ENCODE measurements at regions of chr2 and their contacts with region 1.

Region 1: GRCh38 chr2:233129351-233129987 is 69.3 kb downstream of the INPP5D start:
- DNase-seq: peak; percentile 78
- ATAC-seq: peak; percentile 92
- H3K4me3 Mint-ChIP-seq: no peak overlapping the region
- H3K27ac Mint-ChIP-seq: no peak overlapping the region; the same call in 1 of the 2 replicates
- H3K4me1 Mint-ChIP-seq: peaks cover 24% of the 10 kb centered on the region
- H3K27me3 Mint-ChIP-seq: no peaks in the 10 kb centered on the region
- CTCF ChIP-seq: peak; percentile 38; the same call in 1 of the 2 replicates

Region 2: GRCh38 chr2:232999354-232999753 is 130.1 kb before region 1 on chr2:
- CTCF ChIA-PET with region 1: no interaction called
- POLR2A ChIA-PET with region 1: no interaction called
- DNase-seq: no peak
- ATAC-seq: peak; percentile 69
- H3K4me3 Mint-ChIP-seq: no peak overlapping the region
- H3K27ac Mint-ChIP-seq: no peak overlapping the region
- H3K4me1 Mint-ChIP-seq: no peaks in the 10 kb centered on the region
- H3K27me3 Mint-ChIP-seq: peaks cover 2% of the 10 kb centered on the region; the same call in 1 of the 2 replicates
- CTCF ChIP-seq: no peak

Region 3: DNA sequence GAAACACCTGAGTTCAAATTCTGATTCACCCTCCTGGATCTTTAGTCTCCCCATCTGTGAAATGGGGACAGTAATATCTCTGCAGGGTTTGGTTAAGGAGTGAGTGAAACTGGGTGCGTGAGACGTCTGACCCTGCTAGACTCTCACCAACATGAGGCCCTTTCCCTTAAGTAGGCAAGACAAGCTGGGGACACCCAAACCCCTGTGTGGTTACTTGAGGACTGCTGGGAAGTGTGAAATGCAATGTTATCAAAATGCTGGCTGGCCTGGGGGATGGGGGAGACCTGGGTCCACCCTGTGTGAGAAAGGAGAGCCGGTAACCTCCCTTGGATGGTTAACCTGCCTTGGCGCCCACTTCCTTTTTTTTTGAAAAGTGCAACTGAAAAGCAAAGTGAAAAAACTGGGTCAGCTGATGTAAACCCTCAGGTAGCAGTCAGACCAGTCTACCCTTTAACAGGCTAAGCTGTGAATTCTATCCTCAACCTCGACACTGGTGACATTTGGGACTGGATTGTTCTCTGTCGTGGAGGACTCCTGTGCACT is 13.0 kb after region 1 on chr2:
- CTCF ChIA-PET with region 1: interaction called, 25 read pairs
- POLR2A ChIA-PET with region 1: no interaction called
- DNase-seq: no peak
- ATAC-seq: no peak
- H3K4me3 Mint-ChIP-seq: peak overlapping the region; percentile 3
- H3K27ac Mint-ChIP-seq: peak overlapping the region; percentile 93
- H3K4me1 Mint-ChIP-seq: peaks cover 63% of the 10 kb centered on the region
- H3K27me3 Mint-ChIP-seq: no peaks in the 10 kb centered on the region
- CTCF ChIP-seq: no peak

Region 4: DNA sequence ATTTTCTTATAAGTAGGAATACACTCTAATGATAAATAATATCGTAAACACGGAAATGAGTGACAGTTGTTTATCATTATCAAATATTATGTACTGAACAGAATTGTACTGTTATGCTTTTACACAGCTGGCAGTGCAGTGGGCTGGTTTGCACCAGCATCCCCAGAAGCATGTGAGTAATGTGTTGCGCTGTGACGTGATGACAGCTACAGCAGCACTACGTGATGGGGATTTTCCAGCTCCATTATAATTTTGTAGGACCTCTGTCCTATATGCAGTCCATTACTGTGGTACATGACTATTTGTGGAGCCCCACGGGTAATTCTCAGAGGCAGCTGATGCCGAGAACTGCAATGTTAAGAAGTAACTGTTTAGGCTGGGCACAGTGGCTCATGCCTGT is 44.7 kb after region 1 on chr2:
- CTCF ChIA-PET with region 1: no interaction called
- POLR2A ChIA-PET with region 1: no interaction called
- DNase-seq: no peak
- ATAC-seq: no peak
- H3K4me3 Mint-ChIP-seq: no peak overlapping the region
- H3K27ac Mint-ChIP-seq: no peak overlapping the region
- H3K4me1 Mint-ChIP-seq: peaks cover 6% of the 10 kb centered on the region
- H3K27me3 Mint-ChIP-seq: peaks cover 3% of the 10 kb centered on the region; the same call in 1 of the 2 replicates
- CTCF ChIP-seq: no peak

Region 5: DNA sequence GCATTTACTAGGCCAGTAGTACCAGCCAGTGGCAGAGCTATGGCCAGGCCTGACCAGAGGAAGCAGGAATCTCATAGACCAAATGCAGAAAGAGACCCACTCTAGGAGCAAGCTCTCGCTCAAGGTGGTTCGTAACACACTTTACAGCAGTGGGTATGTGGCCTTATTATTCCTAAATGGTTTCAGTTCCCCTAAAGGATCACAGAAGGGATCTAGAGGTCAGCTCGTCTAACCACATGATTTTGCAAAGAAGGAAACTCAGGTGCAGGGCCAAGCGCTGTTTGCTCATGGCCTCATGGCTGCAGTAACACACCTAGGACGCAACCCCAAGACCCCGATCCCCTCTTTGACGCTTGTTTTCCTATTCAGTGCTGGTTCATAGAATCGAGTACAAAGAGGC is 56.5 kb after region 1 on chr2:
- CTCF ChIA-PET with region 1: interaction called, 11 read pairs
- POLR2A ChIA-PET with region 1: no interaction called
- DNase-seq: no peak
- ATAC-seq: no peak
- H3K4me3 Mint-ChIP-seq: no peak overlapping the region
- H3K27ac Mint-ChIP-seq: peak overlapping the region; percentile 62; the same call in 1 of the 2 replicates
- H3K4me1 Mint-ChIP-seq: peaks cover 4% of the 10 kb centered on the region; the same call in 1 of the 2 replicates
- H3K27me3 Mint-ChIP-seq: no peaks in the 10 kb centered on the region
- CTCF ChIP-seq: no peak

Measured in WTC11 (cell line).